ENCODE measurements at regions of chr7 and their contacts with region 1.

Region 1: DNA sequence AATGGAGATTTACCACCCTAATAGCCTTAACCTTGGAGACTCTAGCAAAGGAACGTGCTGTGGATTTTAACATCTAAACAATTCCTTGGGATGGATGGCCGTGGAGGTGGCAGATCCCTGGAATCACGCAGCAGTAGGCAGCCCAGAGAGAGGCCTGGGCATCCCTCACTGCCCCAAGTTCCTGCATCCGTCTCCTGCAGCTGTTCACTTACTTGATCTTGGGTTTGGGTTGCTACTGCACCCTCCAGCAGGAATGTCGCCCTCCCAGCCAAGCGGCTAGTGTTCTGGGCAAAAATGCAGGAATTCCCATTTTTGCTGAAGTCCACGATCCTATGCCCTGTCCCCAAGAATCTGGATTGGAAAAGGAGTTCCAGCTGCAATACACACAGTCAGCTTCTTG is 166.7 kb upstream of the SH2B2 start:
- DNase-seq: no peak
- ATAC-seq: no peak
- H3K4me3 ChIP-seq: no peak overlapping the region
- H3K27ac ChIP-seq: peak overlapping the region in 4 of 10 donors; percentile 4 to 58 (median 24)
- H3K4me1 ChIP-seq: peaks cover 0 to 26% (median 4%) of the 10 kb centered on the region in 9 donors
- H3K27me3 ChIP-seq: no peaks in the 10 kb centered on the region
- CTCF ChIP-seq: no peak

Region 2: GRCh38 chr7:102106625-102107024 is 13.3 kb before region 1 on chr7:
- intact Hi-C with region 1: no loop called
- DNase-seq: no peak
- ATAC-seq: peak in 1 of 8 donors; percentile 22
- H3K4me3 ChIP-seq: no peak overlapping the region
- H3K27ac ChIP-seq: no peak overlapping the region
- H3K4me1 ChIP-seq: peaks cover 0 to 3% (median 0%) of the 10 kb centered on the region in 9 donors
- H3K27me3 ChIP-seq: no peaks in the 10 kb centered on the region
- CTCF ChIP-seq: no peak

Region 3: DNA sequence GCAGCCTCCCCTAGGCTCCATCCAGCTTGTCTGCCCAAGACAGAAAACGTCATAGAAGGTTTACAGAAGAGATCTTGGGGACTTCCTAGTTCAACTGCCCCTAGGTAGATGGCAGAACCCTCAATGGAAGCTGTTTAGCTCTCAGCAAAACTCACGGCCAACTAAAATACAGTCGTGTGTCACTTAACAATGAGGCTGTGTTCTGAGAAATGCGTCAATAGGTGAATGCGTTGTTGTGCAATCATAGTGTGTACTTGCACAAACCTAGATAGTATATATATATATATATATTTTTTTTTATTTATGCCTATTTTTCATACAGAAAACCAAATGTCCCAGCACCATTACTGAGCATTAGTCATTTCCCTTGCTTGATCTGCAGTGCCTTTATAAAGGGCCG is 66.4 kb after region 1 on chr7:
- intact Hi-C with region 1: loop called in 1 of 10 experiments (anchors 2 kb)
- DNase-seq: no peak
- ATAC-seq: no peak
- H3K4me3 ChIP-seq: no peak overlapping the region
- H3K27ac ChIP-seq: no peak overlapping the region
- H3K4me1 ChIP-seq: peaks cover 0 to 8% (median 0%) of the 10 kb centered on the region in 9 donors
- H3K27me3 ChIP-seq: no peaks in the 10 kb centered on the region
- CTCF ChIP-seq: no peak

Measured in heart right ventricle (tissue), 16 donors.